ENCODE measurements at regions of chr14 and their contacts with region 1.

Region 1: DNA sequence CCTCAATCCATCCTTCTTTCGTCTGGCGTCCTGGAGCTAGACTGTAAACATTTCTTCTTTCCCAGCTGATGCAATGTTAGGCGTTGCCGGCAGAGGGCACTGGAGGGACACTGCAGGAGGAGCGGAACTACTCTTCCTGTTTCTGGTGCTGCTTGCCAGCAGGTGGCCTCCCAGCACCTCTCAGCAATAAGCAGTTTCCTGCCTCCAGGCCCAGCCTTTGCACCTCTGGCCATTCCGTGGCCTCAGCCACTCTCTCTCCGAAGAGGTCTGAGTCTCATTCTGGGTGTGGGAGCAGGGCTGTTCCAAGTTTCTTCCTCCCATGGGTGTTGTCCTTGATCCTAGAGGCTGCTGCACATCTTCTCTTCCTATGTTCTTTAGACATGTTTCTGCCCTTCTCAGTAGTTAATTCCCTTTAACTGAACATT is 7.5 kb upstream of the ASPG start:
- DNase-seq: peak; percentile 92
- ATAC-seq: peak; percentile 99
- H3K4me3 Mint-ChIP-seq: peak overlapping the region; percentile 19
- H3K27ac Mint-ChIP-seq: peak overlapping the region; percentile 23
- H3K4me1 Mint-ChIP-seq: peaks cover 17% of the 10 kb centered on the region
- H3K27me3 Mint-ChIP-seq: peaks cover 14% of the 10 kb centered on the region

Region 2: GRCh38 chr14:104094709-104095438 is 16.8 kb after region 1 on chr14:
- CTCF ChIA-PET with region 1: interaction called, 33 read pairs
- DNase-seq: peak; percentile 74
- ATAC-seq: peak; percentile 72
- H3K4me3 Mint-ChIP-seq: no peak overlapping the region
- H3K27ac Mint-ChIP-seq: no peak overlapping the region
- H3K4me1 Mint-ChIP-seq: no peaks in the 10 kb centered on the region
- H3K27me3 Mint-ChIP-seq: no peaks in the 10 kb centered on the region

Region 3: GRCh38 chr14:104129556-104129955 is 51.5 kb after region 1 on chr14:
- CTCF ChIA-PET with region 1: interaction called, 11 read pairs
- DNase-seq: no peak
- ATAC-seq: no peak
- H3K4me3 Mint-ChIP-seq: no peak overlapping the region
- H3K27ac Mint-ChIP-seq: no peak overlapping the region
- H3K4me1 Mint-ChIP-seq: no peaks in the 10 kb centered on the region
- H3K27me3 Mint-ChIP-seq: peaks cover 25% of the 10 kb centered on the region

Region 4: DNA sequence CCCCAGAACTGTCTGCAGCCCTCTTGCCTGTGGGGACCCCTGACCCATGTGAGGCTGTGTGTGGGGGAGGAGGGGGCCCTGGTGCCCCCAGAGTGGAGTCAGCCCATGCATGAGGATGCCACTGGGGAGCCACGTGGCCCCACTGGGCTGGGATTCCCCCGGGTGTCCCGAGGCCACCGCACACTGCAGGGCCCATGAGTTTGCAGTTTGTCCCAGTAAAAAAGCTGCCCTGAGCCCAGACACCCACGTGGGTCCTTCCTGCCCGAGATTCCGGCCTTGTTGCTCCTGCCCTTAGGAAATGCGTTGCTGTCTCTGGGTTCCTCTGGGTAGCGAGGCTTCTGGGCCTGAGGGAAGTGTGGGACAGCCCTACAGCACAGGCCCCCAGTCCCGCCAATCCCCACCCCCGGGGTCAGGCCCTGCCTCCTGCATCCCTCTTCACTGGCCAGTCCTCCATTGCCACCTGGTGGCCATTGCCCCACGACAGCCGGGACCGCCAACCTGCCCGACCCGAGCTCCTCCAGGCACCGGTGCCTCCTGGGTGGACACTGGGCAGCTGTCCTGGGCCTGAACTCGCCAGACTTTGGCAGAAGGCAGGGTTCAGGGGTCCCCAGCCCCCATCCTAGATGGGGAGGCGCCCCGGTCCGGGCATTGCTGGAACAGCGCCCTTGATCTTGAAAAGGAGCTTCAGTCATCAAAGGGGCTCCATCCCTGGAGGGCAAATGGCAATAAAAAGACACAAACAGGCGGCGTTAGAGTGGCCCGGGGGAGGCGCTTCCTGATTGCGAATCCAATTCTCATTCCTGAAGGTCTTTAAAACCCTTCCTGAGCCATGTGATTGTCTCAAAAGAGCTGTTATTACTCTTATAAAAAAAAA is 485.9 kb after region 1 on chr14:
- CTCF ChIA-PET with region 1: interaction called, 11 read pairs
- DNase-seq: peak; percentile 70
- ATAC-seq: peak; percentile 56
- H3K4me3 Mint-ChIP-seq: no peak overlapping the region
- H3K27ac Mint-ChIP-seq: no peak overlapping the region
- H3K4me1 Mint-ChIP-seq: no peaks in the 10 kb centered on the region
- H3K27me3 Mint-ChIP-seq: peaks cover 5% of the 10 kb centered on the region